Heart left ventricle (tissue), 16 donors: ENCODE measurements at regions of chr1 and their contacts with region 1.

Region 1: GRCh38 chr1:167635156-167635648 is 5.2 kb downstream of the RCSD1 start:
- DNase-seq: peak; percentile 64 to 81 (median 68)
- ATAC-seq: peak; percentile 47 to 80 (median 74)
- H3K4me3 ChIP-seq: peak overlapping the region in 8 of 12 donors; percentile 3 to 31 (median 24)
- H3K27ac ChIP-seq: peak overlapping the region; percentile 15 to 99 (median 78)
- H3K4me1 ChIP-seq: peaks cover 9 to 87% (median 66%) of the 10 kb centered on the region in 12 donors
- H3K27me3 ChIP-seq: no peaks in the 10 kb centered on the region
- CTCF ChIP-seq: no peak
- POLR2A ChIP-seq: peak in 1 of 2 donors; percentile 13

Region 2: GRCh38 chr1:166588741-166589140 is 1046.5 kb before region 1 on chr1:
- intact Hi-C with region 1: no loop called
- DNase-seq: no peak
- ATAC-seq: no peak
- H3K4me3 ChIP-seq: no peak overlapping the region
- H3K27ac ChIP-seq: no peak overlapping the region
- H3K4me1 ChIP-seq: peaks cover 0 to 8% (median 0%) of the 10 kb centered on the region in 12 donors
- H3K27me3 ChIP-seq: no peaks in the 10 kb centered on the region
- CTCF ChIP-seq: no peak
- POLR2A ChIP-seq: no peak

Region 3: DNA sequence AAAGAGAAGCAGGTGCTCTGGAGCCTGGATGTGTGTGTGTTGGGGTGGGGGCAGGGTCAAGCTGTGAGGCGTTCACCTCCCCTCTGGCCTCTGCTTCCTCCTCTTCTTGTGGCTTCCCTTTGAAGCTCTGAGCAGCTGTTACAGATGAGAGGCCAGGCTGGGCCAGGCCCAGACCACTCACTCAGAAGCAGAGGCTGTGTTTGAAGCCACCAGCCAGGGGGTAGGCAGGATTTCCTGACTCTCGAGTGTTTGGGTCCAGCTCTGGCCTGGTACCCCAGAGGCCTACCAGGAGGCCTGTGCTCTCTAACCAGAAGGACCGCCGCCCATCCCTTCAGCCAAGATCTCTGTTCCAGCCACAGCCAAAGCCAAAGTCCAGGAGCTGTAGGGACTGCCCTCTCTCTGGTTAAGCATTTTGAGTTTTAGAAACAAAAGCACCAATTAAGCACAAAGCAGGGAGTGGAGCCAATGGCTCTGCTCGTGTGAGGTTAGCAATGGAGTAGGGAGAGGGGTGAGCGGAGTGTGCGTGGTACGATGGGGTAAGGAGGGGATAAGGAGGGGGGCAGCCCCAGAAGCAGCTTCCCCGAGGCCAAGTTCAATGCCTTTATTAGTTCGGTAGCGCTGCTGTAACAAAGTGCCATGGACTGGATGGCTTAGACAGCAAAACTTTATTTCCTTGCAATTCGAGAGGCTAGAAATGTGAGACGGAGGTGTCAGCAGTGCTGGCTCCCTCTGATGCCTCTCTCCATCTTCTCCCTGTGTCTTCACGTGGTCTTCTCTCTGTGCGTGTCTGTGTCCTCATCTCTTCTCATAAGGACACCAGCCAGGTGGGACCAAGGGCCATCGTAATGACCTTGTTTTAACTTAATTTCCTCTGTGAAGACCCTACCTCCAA is 15.3 kb after region 1 on chr1:
- intact Hi-C with region 1: loop called in 2 of 10 experiments (anchors 2 kb)
- DNase-seq: peak in 3 of 5 donors; percentile 51 to 65 (median 59)
- ATAC-seq: peak; percentile 19 to 59 (median 46)
- H3K4me3 ChIP-seq: no peak overlapping the region
- H3K27ac ChIP-seq: peak overlapping the region; percentile 19 to 88 (median 76)
- H3K4me1 ChIP-seq: peaks cover 22 to 97% (median 88%) of the 10 kb centered on the region in 12 donors
- H3K27me3 ChIP-seq: no peaks in the 10 kb centered on the region
- CTCF ChIP-seq: no peak
- POLR2A ChIP-seq: no peak